Left cardiac atrium (tissue), 4 donors: ENCODE measurements at regions of chr1 and their contacts with region 1.

Region 1: GRCh38 chr1:8077120-8077573 is 51.0 kb upstream of the ERRFI1 start:
- DNase-seq: peak; percentile 66
- ATAC-seq: peak; percentile 91 to 97

Region 2: DNA sequence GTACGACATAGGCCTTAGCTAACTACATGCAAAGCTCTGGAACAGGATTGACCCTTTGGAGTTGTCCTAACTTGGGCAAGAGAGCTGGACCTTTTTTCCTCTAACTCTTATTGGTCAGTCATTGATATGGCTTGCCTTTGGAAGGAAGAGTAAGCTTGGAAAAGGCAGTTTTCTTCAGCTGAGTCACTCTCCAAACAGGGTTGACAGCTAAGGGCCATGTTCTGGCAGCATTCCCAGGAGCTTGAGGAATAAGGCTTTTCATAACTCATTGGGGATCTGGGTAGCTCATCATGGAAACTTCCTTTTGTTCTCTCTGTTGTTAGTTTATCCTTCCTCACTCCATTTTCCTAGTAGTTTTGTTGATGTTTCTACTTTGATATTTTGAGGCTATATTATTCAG is 36.6 kb before region 1 on chr1:
- intact Hi-C with region 1: loop called in 1 of 2 experiments (anchors 5 kb)
- DNase-seq: peak; percentile 83
- ATAC-seq: peak; percentile 68 to 96

Region 3: GRCh38 chr1:8687039-8687438 is 609.9 kb after region 1 on chr1:
- intact Hi-C with region 1: no loop called
- DNase-seq: no peak
- ATAC-seq: peak in 1 of 2 donors; percentile 59